Aorta (tissue), 5 donors: ENCODE measurements at regions of chr20 and their contacts with region 1.

Region 1: DNA sequence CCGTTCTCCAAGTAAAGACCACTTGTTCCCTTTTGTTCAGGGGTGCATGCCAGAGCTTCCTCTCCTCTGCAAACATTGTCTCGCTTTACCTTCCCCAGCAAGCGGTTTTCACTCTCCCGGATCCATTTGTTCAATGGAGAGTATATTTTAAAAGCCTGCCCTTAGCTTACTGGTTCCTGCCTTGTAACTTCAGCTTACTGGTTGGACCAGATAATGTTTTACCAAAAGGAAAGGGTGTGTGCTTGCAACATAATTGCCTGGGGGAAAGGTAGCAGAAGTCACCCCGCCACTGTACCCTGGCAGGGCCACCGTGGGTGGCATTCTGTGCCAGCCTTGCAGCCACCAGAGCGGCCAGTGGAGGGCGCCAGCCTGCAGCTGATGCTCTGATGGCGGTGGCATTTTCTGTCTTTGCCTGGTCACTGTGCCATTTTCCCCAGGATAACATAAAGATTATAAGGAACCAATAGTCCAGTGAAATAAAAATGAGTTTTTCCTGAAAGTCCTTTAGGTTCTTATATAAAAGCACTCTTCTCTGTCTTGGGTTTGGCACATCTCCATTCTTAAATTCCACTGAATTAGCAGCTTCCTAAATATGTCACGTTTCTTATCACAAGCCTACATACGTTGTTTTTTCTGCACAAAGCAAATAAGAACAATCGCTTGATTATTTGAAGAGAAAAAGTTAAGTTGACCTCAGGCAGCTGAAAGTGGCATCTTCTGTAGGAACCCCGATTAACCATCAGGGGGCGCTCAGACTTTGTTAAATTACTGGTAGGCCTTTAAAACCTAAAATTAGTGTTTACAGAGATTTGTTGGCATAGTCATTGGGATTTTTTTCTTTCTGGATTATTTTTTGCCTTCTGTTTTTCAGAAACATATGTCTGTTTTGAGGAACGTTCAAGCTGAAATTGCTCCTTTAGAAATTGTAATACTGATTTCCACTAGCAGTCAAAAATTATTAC is 67.4 kb upstream of the XRN2 start:
- DNase-seq: peak; percentile 56 to 84
- ATAC-seq: peak; percentile 84
- H3K4me3 ChIP-seq: no peak overlapping the region
- H3K27ac ChIP-seq: no peak overlapping the region
- H3K4me1 ChIP-seq: no peaks in the 10 kb centered on the region
- H3K27me3 ChIP-seq: no peaks in the 10 kb centered on the region

Region 2: DNA sequence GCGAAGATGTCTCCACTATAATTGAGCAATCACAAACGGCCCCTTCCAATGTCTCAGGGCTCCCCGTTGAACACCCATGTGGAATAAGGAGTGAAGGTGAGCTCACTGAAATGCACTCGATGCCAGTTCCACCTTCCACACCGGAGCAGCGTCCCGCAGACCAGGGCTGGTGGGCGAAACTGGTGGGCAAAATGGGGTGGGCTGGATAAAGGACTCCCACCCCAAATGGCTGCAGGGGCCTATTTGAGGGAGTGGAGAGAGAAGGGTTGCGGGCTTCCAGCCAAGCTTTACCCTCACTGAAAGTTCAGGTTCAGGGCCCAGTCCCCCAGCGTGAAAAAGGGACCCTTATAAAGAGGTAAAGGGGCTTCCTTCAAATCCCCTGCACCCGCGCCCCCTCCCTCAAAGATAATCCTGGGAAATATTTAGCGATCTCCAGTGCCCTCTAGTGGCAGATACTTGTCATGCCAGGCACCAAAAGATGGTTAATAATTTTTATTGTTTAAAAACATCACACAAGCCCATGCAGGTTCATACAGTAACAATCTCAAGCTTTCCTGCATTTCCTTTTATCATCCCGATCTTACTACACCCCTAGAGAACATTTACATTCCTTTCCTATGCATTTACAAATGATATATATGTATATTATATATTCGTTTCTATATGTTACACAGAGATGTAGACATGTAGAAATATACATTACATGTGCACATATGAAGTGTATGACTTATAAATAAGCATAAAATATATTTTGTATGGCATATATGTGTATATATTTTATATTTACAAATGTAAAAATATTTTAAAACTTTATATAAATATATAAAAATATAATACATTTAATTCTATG is 336.3 kb after region 1 on chr20:
- intact Hi-C with region 1: loop called (anchors 5 kb)
- DNase-seq: no peak
- ATAC-seq: no peak
- H3K4me3 ChIP-seq: no peak overlapping the region
- H3K27ac ChIP-seq: no peak overlapping the region
- H3K4me1 ChIP-seq: no peaks in the 10 kb centered on the region
- H3K27me3 ChIP-seq: peaks cover 0 to 3% of the 10 kb centered on the region in 2 donors